ENCODE measurements at regions of chr18 and their contacts with region 1.

Region 1: DNA sequence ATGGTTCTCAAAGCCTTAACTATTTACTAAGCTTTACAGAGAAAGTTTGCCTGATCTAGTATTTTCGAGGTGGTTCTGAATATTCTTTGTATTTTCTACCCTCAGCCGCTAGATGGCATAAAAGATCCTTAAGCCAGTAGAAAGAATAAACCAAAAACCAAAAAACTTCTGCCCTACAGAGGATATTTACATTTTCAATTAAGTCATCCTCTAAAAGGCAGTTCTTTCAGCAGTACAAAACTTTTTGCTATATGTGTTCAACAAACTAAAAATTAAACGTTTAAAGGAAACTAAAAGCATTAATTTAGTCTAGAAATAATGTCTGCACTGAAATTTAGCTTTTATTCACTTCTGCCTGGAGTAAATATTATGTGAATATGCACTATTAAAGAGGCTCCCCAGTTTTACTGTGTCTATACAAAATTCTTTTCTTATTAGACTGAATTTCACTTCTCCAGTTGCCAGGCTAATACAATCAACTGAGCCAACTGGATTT is 297.5 kb downstream of the PIEZO2 start:
- DNase-seq: no peak
- H3K4me3 ChIP-seq: no peak overlapping the region
- H3K27ac ChIP-seq: no peak overlapping the region
- H3K4me1 ChIP-seq: no peaks in the 10 kb centered on the region
- H3K27me3 ChIP-seq: no peaks in the 10 kb centered on the region
- CTCF ChIP-seq: peak; percentile 53 to 78 (median 66)
- POLR2A ChIP-seq: no peak

Region 2: GRCh38 chr18:10499230-10499629 is 352.6 kb before region 1 on chr18:
- intact Hi-C with region 1: no loop called
- DNase-seq: no peak
- H3K4me3 ChIP-seq: no peak overlapping the region
- H3K27ac ChIP-seq: no peak overlapping the region
- H3K4me1 ChIP-seq: no peaks in the 10 kb centered on the region
- H3K27me3 ChIP-seq: no peaks in the 10 kb centered on the region
- CTCF ChIP-seq: no peak
- POLR2A ChIP-seq: no peak

Region 3: GRCh38 chr18:11040823-11041656 is 189.2 kb after region 1 on chr18:
- intact Hi-C with region 1: loop called (anchors 5 kb)
- DNase-seq: no peak
- H3K4me3 ChIP-seq: no peak overlapping the region
- H3K27ac ChIP-seq: no peak overlapping the region
- H3K4me1 ChIP-seq: no peaks in the 10 kb centered on the region
- H3K27me3 ChIP-seq: no peaks in the 10 kb centered on the region
- CTCF ChIP-seq: peak; percentile 36 to 67 (median 54)
- POLR2A ChIP-seq: no peak

Region 4: DNA sequence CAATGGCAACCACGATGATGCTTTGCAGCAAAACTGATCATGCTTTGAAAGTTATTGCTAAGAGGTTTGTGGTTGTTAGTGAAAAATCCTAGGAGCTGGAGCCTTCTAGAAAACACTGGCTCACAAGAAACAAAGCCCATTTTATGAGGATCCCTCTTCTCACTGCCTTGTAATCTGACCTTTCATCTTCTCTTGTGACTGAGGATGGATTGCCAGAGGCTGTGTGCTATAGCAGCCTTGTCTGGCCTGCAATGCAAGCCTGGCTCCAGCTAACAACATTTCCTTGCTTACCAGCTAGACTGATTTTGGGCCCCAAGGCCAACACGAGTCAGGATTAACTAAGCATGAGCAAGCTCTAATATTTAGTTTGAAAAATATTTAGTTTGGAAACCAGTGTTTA is 284.4 kb after region 1 on chr18:
- intact Hi-C with region 1: no loop called
- DNase-seq: no peak
- H3K4me3 ChIP-seq: no peak overlapping the region
- H3K27ac ChIP-seq: no peak overlapping the region
- H3K4me1 ChIP-seq: no peaks in the 10 kb centered on the region
- H3K27me3 ChIP-seq: no peaks in the 10 kb centered on the region
- CTCF ChIP-seq: no peak
- POLR2A ChIP-seq: no peak

Region 5: GRCh38 chr18:11155034-11155759 is 303.3 kb after region 1 on chr18:
- intact Hi-C with region 1: loop called (anchors 5 kb)
- DNase-seq: no peak
- H3K4me3 ChIP-seq: no peak overlapping the region
- H3K27ac ChIP-seq: no peak overlapping the region
- H3K4me1 ChIP-seq: no peaks in the 10 kb centered on the region
- H3K27me3 ChIP-seq: no peaks in the 10 kb centered on the region
- CTCF ChIP-seq: no peak
- POLR2A ChIP-seq: no peak

Region 6: DNA sequence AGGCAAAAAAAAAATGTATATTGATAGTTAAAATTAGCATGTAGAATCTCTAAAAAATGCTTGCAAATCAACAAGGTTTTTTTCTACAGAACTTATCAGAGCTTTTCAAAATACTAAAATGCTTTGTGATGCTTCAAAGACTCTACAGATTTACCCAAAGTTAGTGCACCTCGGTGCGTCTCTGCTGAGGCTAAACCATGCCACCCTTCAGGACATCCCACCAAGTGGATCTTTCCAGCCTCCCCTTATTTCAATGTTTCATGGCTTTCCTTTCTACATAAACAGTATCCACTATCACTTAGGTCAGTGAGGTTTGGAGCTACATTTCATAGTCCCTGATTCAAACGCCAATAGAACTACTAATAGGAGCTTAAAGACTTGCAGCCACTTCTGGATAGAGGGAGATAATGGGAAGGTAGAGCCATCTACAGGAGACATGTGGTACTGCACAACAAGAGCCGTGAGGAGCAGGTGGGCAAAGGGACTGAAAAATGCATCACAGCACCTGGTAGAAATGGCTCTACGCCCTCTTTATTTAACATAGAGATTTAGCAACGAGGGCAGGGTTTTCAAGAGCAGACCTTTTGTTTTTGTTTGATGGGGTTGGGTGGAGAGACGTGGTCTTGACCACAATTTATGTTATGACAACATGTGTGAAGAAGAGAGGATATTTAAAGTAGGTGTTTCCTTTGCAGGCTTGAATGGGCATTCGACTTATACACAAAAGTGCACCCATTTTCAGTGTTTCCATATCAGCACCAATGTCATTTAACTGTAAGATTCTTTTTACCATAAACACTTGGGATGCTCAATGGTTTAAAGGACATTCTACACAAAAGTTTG is 701.4 kb after region 1 on chr18:
- intact Hi-C with region 1: loop called (anchors 5 kb)
- DNase-seq: no peak
- H3K4me3 ChIP-seq: no peak overlapping the region
- H3K27ac ChIP-seq: no peak overlapping the region
- H3K4me1 ChIP-seq: no peaks in the 10 kb centered on the region
- H3K27me3 ChIP-seq: no peaks in the 10 kb centered on the region
- CTCF ChIP-seq: peak; percentile 68 to 75 (median 69)
- POLR2A ChIP-seq: no peak